ENCODE measurements at regions of chr5 and their contacts with region 1.

Region 1: DNA sequence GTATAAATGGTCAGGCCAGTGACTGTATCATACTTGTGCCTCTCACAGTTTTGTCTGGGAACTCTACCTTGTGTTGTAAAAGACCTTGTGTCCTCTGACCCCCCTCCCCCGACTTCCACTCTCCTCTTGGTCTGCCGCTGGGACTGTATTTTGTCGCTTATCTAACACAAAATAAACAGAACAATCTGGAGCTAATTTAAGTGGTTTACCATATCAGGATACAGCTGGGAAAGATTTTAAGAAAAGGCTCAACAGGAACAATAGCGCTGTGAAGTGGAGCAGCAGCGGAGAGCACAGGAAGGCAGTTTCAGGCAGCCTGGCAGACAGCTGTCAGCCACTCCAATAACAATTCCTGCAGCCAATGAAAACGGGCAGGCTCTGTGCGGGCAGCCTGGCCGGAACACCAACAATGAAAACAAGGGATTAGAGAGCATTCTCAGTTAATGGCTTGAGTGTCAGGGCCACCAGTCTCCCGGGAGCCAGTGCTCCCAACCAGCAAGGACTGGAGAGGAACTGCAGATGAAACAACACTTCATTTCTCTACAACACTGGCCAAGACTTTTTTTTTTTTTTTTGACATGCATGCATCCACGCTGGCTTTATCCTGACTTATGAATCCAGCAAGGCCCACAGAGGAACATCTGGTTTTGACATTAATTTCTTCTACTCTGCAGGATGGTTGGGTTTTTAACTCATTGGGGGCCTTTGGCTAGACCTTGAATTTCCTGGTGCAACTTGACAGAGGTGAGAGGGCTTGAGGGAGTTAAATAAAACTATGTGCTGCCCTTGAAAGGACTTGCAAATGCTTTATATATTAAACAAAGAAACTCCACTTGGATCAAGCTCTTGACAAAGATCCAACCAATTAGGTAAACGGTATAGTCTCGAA is 76.7 kb downstream of the ARSB start:
- DNase-seq: no peak
- H3K4me3 ChIP-seq: peak overlapping the region in 1 of 3 donors; percentile 38
- H3K27ac ChIP-seq: peak overlapping the region; percentile 52 to 77
- H3K4me1 ChIP-seq: no peaks in the 10 kb centered on the region
- H3K27me3 ChIP-seq: no peaks in the 10 kb centered on the region
- CTCF ChIP-seq: no peak
- POLR2A ChIP-seq: no peak

Region 2: DNA sequence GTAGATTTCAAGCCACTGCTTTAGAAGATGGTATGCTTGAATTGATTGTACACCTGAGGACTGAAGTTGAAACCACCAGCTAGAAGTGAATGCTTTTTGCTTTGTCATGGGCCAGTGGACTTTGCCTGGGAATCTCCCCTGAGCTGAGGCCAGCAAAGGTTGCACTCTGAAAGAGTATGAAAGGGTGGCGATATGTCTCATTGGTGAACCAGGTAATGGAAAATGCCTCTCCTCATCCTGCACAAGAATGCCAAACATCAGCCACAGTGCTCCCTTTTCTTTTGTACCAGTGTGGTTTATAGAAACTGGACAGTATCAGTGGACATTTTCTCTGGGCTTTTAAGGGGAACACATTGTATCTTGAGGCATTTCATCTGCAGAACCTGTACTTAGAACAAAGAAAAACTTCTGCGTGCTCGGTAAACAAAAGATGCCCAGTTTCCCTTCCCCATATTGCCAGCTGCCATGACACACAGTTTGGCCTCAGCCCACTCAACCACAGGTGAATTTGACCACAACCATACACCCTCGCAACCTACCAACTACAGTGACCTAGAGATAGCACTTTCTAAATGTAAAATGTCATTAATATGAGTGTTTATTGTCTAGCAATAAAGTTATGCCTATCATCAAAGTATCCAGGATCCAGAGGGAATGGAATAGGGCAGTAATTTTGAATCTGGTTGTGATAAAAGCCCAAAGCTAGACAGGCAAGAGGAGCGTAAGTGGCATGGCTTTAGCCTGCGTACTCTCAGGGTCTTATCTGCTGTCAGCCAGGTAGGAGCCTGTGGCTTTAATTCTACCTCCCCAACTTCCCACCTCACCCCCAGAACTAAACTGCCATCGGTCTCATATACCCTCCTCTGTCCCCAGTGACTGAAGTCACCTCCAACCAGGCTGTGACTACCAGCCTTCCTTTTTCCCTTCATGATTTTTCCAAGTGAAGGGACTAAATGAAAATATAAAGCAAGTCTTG is 180.3 kb before region 1 on chr5:
- intact Hi-C with region 1: no loop called
- DNase-seq: no peak
- H3K4me3 ChIP-seq: no peak overlapping the region
- H3K27ac ChIP-seq: no peak overlapping the region
- H3K4me1 ChIP-seq: no peaks in the 10 kb centered on the region
- H3K27me3 ChIP-seq: no peaks in the 10 kb centered on the region
- CTCF ChIP-seq: no peak
- POLR2A ChIP-seq: no peak

Region 3: DNA sequence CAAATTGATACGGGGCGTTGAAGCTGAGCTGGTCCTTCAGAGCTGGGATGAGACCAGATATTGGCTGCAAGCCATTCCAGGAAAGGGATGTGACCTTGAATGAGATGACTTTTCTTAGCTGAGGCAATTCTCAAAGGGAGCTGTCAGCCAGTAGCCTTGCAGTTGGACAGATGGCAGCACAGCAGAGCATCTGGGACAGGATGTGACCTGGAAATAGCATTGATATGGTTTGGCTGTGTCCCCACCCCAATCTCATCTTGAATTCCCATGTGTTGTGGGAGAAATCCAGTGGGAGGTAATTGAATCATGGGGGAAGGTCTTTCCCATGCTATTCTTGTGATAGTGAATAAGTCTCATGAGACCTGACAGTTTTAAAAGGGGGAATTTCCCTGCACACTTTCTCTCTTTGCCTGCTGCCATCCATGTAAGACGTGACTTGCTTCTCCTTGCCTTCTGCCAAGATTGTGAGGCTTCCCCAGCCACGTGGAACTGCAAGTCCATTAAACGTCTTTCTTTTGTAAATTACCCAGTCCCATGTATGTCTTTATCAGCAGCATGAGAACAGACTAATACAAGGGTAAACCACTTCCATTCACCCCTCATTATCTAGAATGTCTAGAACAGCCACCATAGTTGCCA is 1102.5 kb after region 1 on chr5:
- intact Hi-C with region 1: loop called (anchors 5 kb)
- DNase-seq: no peak
- H3K4me3 ChIP-seq: no peak overlapping the region
- H3K27ac ChIP-seq: no peak overlapping the region
- H3K4me1 ChIP-seq: no peaks in the 10 kb centered on the region
- H3K27me3 ChIP-seq: no peaks in the 10 kb centered on the region
- CTCF ChIP-seq: no peak
- POLR2A ChIP-seq: no peak

Region 4: GRCh38 chr5:80284720-80285119 is 1376.3 kb after region 1 on chr5:
- intact Hi-C with region 1: no loop called
- DNase-seq: no peak
- H3K4me3 ChIP-seq: no peak overlapping the region
- H3K27ac ChIP-seq: no peak overlapping the region
- H3K4me1 ChIP-seq: no peaks in the 10 kb centered on the region
- H3K27me3 ChIP-seq: no peaks in the 10 kb centered on the region
- CTCF ChIP-seq: no peak
- POLR2A ChIP-seq: no peak

Measured in breast epithelium (tissue), 4 donors.